ENCODE measurements at regions of chr5 and their contacts with region 1.

Region 1: DNA sequence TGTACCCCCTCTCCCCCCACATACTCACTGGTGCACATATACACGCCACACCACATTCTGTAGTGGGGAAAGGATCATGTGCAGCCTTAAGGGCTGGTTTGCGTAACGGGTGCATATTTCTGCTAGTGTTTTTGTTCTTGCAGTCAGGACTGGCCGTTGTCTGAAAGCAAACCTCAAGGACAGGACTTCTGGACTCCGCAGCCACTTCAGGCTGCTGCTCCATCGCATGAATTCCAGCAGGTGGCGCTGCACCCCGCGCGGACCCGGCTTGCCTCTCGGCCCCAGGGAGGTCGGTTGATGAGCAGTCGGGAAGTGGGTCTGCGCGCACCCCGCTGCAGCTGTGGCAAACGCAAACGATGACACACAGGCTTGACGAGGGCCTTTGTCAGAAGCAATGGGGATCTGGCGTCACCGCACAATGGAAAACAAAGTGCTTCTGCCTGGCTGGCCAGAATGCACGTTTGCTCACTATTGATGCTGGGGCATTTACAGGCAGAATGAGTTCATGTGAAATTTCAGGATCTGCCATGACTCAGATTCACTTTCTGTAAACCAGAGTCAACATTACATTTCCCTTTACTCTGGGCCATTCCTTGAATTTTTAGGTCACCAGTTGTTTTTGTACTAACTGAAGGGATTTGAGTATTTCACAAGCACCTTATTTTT is 36.3 kb upstream of the GLRX start:
- DNase-seq: peak; percentile 99
- H3K4me3 ChIP-seq: peak overlapping the region in 2 of 3 experiments; percentile 1 to 18
- H3K27ac ChIP-seq: peak overlapping the region; percentile 98
- H3K4me1 ChIP-seq: peaks cover 58% of the 10 kb centered on the region
- H3K27me3 ChIP-seq: no peaks in the 10 kb centered on the region
- CTCF ChIP-seq: peak; percentile 93 to 99
- POLR2A ChIP-seq: no peak

Region 2: DNA sequence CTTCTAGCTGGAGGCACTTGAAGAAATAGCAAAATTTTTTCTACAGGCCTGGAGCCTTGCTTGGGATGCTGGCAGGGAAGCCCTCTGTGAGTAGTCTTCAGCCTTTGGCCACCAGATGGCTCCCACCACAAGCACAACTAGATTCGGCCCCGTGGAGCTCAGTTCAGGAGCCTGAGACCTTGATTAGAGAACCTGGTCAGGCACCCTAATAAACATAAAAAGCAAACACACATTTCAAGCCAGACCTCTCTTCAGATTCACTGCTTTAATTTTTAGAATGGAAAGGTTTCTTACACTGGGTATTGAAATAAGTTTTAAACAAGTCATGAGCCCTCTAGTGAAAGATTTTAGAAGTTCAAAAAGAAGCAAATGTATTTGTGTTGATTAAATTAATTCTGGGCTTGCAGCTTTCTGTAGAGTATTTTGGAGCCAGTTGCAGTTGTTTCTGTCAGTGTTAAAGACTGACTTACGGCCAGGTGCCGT is 77.7 kb before region 1 on chr5:
- CTCF ChIA-PET with region 1: interaction called, 201 read pairs
- POLR2A ChIA-PET with region 1: no interaction called
- dilution Hi-C with region 1: no loop called
- intact Hi-C with region 1: no loop called
- DNase-seq: peak; percentile 84
- H3K4me3 ChIP-seq: no peak overlapping the region
- H3K27ac ChIP-seq: no peak overlapping the region
- H3K4me1 ChIP-seq: peaks cover 11% of the 10 kb centered on the region
- H3K27me3 ChIP-seq: no peaks in the 10 kb centered on the region
- CTCF ChIP-seq: peak; percentile 85 to 94
- POLR2A ChIP-seq: no peak

Region 3: GRCh38 chr5:95878417-95879323 is 19.9 kb after region 1 on chr5:
- CTCF ChIA-PET with region 1: interaction called, 5 read pairs
- POLR2A ChIA-PET with region 1: interaction called, 10 read pairs
- dilution Hi-C with region 1: no loop called
- intact Hi-C with region 1: no loop called
- DNase-seq: no peak
- H3K4me3 ChIP-seq: no peak overlapping the region
- H3K27ac ChIP-seq: no peak overlapping the region
- H3K4me1 ChIP-seq: no peaks in the 10 kb centered on the region
- H3K27me3 ChIP-seq: no peaks in the 10 kb centered on the region
- CTCF ChIP-seq: no peak
- POLR2A ChIP-seq: no peak

Region 4: DNA sequence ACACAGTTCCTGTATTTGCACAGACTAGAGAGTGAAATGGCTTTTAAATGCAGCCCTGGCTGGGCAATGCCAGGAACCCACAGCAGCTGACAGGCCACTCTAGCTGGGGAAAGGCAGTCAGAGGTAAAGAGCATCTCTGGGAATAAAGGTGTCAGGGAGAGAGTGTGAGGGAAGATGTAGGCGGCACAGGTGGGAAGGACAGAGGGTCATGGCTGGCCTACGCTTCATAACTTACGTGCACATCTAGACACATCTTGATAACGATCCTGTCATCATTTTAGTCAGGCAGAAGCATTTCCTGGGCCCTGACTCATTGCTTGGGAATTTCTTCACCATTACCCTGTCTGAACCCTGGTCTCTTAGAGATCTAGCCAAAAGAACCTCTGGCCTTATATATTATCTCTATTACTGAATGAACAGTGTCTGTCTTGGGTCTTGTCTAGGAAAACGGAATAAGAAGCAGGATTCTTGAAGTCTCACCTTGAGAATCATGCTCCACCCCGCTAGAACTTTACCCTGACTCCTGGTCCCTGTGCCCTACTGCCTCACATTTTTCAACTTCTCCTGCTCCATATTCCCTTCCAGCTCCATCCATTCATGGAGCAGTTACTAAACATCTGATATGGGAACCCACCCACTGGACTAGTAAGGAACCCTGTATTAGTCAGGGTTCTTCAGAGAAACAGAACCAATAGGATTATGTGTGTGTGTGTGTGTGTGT is 209.3 kb after region 1 on chr5:
- CTCF ChIA-PET with region 1: no interaction called
- POLR2A ChIA-PET with region 1: no interaction called
- dilution Hi-C with region 1: no loop called
- intact Hi-C with region 1: loop called (anchors 1 kb)
- DNase-seq: peak; percentile 72
- H3K4me3 ChIP-seq: no peak overlapping the region
- H3K27ac ChIP-seq: peak overlapping the region; percentile 90
- H3K4me1 ChIP-seq: peaks cover 38% of the 10 kb centered on the region
- H3K27me3 ChIP-seq: no peaks in the 10 kb centered on the region
- CTCF ChIP-seq: no peak
- POLR2A ChIP-seq: peak; percentile 88

Region 5: DNA sequence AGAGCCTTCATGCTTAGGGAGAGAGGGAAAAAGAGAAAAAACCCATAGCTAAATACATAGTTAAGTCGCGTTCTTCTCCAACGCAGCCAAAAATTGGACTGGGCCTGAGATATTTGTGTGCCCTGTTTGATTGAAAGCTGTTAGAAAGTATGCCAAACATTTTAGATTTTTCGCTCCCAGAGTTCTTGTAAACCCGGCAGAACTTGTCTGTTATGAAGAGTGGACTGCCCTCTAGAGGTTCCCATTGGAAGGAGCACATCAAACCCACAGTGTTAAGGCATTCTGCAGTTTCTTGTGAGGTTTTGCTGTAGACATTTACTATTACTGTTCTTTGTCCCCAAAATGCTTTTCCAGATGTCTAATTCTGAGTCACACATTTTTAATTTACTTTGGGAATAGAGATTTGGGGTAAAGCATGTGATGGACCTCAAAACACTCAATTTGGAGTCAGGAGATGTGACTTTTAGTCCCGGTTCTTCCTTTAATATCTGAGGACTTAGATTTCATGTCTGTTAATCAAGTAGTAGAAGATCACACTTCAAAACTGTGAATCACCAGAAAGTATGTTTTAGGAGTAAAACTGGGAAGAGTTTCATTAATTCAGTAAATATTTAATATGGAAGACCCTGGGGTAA is 477.7 kb after region 1 on chr5:
- CTCF ChIA-PET with region 1: interaction called, 73 read pairs
- POLR2A ChIA-PET with region 1: no interaction called
- dilution Hi-C with region 1: no loop called
- intact Hi-C with region 1: loop called (anchors 1 kb)
- DNase-seq: peak; percentile 92
- H3K4me3 ChIP-seq: no peak overlapping the region
- H3K27ac ChIP-seq: peak overlapping the region; percentile 32
- H3K4me1 ChIP-seq: peaks cover 7% of the 10 kb centered on the region
- H3K27me3 ChIP-seq: no peaks in the 10 kb centered on the region
- CTCF ChIP-seq: peak; percentile 84 to 88
- POLR2A ChIP-seq: no peak

Region 6: GRCh38 chr5:96582343-96582742 is 723.5 kb after region 1 on chr5:
- CTCF ChIA-PET with region 1: no interaction called
- POLR2A ChIA-PET with region 1: no interaction called
- dilution Hi-C with region 1: no loop called
- intact Hi-C with region 1: loop called (anchors 5 kb)
- DNase-seq: peak; percentile 64
- H3K4me3 ChIP-seq: no peak overlapping the region
- H3K27ac ChIP-seq: peak overlapping the region; percentile 86
- H3K4me1 ChIP-seq: peaks cover 67% of the 10 kb centered on the region
- H3K27me3 ChIP-seq: no peaks in the 10 kb centered on the region
- CTCF ChIP-seq: no peak
- POLR2A ChIP-seq: no peak